ENCODE measurements at regions of chr4 and their contacts with region 1.

Region 1: DNA sequence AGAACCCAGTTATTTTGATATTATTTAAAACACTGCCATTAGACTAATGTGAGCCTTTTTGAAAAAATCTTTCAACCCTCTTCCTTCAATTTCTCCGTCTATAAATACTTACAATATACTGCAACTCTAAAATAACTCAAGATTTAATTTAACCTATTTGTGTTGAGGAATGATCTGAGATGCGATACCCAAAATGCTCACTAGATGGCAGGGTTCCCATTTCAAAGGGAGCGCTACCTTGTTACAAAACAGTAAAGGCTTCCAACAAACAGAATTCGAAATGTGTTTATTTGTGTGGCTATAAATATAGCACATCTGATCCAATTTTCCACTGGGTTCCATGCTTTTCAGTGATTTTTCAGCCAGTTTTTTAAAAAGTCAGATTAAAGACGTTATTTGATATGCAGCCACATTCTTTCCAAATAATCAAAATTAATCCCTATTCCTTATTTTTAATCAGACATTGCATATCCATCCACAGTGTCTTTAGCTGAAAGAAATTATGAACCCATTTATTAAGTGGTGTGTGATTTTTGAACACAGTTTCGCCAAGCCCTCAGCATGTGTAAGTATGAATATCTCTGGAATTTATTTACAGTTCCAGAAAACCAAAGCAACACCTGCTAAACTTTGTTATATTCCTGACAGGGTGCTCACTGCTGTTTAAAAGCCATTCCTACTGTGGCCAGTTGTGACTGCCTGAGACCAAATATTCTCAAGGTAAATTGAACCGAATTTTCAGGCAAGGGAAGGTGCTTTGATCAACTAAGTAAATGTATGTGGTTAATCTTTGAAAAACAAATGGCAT is 668.0 kb upstream of the LCORL start:
- DNase-seq: no peak
- ATAC-seq: peak in 1 of 4 donors; percentile 66
- H3K4me3 ChIP-seq: no peak overlapping the region
- H3K27ac ChIP-seq: no peak overlapping the region
- H3K4me1 ChIP-seq: peaks cover 10% of the 10 kb centered on the region
- H3K27me3 ChIP-seq: no peaks in the 10 kb centered on the region
- CTCF ChIP-seq: peak; percentile 78

Region 2: DNA sequence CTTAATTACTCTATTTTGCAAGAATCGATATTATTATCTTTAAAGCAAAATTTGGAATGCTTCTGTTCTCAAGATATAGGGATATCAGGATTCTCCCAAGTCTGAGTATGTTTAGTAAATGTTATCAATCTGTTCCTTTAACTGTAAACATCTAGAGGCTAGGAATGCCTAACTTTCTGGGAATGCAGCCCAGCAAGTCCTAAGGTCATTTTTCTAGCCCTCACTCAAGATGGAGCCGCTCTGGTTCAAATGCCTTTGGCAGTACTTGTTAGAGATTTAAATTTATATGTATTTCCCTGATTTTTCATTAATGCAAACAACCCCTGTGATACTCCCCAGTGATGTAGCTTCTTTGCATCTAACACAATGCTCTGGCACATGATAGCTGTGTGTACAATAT is 44.2 kb before region 1 on chr4:
- intact Hi-C with region 1: no loop called
- DNase-seq: no peak
- ATAC-seq: no peak
- H3K4me3 ChIP-seq: no peak overlapping the region
- H3K27ac ChIP-seq: no peak overlapping the region
- H3K4me1 ChIP-seq: no peaks in the 10 kb centered on the region
- H3K27me3 ChIP-seq: no peaks in the 10 kb centered on the region
- CTCF ChIP-seq: no peak

Region 3: GRCh38 chr4:20248155-20248558 is 1558.6 kb after region 1 on chr4:
- intact Hi-C with region 1: loop called in 1 of 2 experiments (anchors 10 kb)
- DNase-seq: no peak
- ATAC-seq: no peak
- H3K4me3 ChIP-seq: no peak overlapping the region
- H3K27ac ChIP-seq: no peak overlapping the region
- H3K4me1 ChIP-seq: no peaks in the 10 kb centered on the region
- H3K27me3 ChIP-seq: peaks cover 0 to 5% (median 2%) of the 10 kb centered on the region in 3 donors
- CTCF ChIP-seq: peak; percentile 62

Region 4: GRCh38 chr4:20684852-20685763 is 1995.6 kb after region 1 on chr4:
- intact Hi-C with region 1: loop called (anchors 5 kb)
- DNase-seq: no peak
- ATAC-seq: no peak
- H3K4me3 ChIP-seq: no peak overlapping the region
- H3K27ac ChIP-seq: no peak overlapping the region
- H3K4me1 ChIP-seq: no peaks in the 10 kb centered on the region
- H3K27me3 ChIP-seq: peaks cover 0 to 4% (median 0%) of the 10 kb centered on the region in 3 donors
- CTCF ChIP-seq: peak; percentile 68

Measured in psoas muscle (tissue), 8 donors.